GM10248 (cell line): ENCODE measurements at regions of chr19 and their contacts with region 1.

Region 1: GRCh38 chr19:50431343-50432220 is 1.1 kb upstream of the MYBPC2 start:
- DNase-seq: peak; percentile 89
- CTCF ChIP-seq: no peak

Region 2: GRCh38 chr19:50383852-50384684 is 47.5 kb before region 1 on chr19 and contains the start of gene POLD1:
- CTCF ChIA-PET with region 1: interaction called, 3 read pairs
- POLR2A ChIA-PET with region 1: interaction called, 15 read pairs
- DNase-seq: peak; percentile 100
- CTCF ChIP-seq: no peak

Region 3: DNA sequence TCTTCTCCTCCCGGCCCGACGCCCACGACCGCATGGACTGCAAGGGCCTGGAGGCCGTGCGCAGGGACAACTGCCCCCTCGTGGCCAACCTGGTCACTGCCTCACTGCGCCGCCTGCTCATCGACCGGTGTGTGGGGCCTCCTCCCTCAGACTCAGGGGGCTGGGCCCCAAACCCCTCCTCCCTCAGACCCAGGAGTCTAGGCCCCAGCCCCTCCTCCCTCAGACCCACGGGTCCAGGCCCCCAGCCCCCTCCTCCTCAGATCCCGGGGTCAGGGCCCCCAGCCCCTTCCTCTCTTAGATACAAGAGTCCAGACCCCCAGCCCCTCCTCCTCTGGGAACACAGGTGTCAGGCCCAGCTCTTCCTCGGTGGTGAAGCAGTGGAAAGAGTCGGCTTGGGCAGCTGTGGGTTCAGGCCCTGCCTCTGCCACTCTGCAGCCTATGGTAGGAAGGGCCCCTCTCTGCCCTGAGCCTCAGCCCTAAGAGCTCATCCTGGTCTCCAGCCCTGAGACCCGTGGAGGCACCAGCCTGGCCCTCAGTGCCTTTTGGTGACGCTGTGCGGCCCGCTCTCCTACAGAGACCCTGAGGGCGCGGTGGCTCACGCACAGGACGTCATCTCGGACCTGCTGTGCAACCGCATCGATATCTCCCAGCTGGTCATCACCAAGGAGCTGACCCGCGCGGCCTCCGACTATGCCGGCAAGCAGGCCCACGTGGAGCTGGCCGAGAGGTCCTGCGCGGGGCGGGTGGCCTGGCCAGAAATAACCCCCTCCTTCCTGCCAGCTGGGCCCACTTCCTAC is 16.5 kb before region 1 on chr19:
- CTCF ChIA-PET with region 1: interaction called, 14 read pairs
- POLR2A ChIA-PET with region 1: interaction called, 6 read pairs
- DNase-seq: peak; percentile 90
- CTCF ChIP-seq: peak; percentile 96

Region 4: DNA sequence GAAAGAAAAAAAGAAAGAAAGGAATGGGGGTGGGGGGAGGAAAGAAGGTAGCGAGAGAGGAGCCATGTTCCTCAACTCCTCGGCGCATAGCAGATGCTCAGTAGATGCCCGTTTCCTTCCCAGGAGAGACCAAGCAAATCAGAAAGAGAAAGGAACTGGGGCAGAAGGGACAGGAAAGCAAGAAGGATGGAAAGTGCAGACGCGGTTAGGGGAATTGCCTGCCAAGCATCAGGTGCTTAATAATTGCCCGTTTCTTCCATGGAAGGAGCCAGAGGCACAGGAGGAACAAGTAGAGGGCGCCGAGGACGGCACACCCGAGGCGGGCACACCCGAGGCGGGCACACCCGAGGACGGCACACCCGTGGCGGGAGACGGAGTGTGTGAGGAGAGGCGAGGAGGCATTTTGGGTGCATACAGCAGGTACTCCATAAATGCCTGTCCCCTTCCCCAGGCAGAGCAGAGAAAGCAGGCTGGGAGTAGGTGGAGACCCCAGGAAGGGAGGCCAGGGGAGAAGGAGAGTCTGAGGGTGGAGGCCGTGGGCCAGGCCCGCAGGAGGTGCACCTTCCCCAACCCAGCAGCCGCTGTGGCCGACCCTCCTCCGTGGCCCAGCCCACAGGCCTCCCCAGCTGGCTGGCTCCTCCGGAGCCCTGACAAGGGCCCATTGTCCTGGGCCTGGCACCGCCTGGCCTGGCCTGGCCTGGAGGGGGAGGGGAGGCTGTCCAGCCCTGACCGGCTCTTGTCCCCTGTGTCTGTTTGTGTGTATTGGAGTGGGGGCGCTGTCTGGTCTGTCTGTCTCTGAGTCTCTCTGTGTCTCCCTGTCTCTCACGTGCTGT is 64.8 kb after region 1 on chr19:
- CTCF ChIA-PET with region 1: no interaction called
- POLR2A ChIA-PET with region 1: no interaction called
- DNase-seq: no peak
- CTCF ChIP-seq: no peak